CD4-positive, alpha-beta memory T cell (primary cell): ENCODE measurements at regions of chr4 and their contacts with region 1.

Region 1: GRCh38 chr4:152063885-152064240 is 303.1 kb upstream of the GATB start:
- DNase-seq: peak; percentile 61 to 73 (median 70)
- H3K4me3 ChIP-seq: no peak overlapping the region
- H3K4me3 Mint-ChIP-seq: peak overlapping the region in 7 of 8 donors; percentile 23 to 72 (median 51)
- H3K27ac ChIP-seq: no peak overlapping the region
- H3K27ac Mint-ChIP-seq: peak overlapping the region; percentile 32 to 82 (median 63)
- H3K4me1 ChIP-seq: peaks cover 44% of the 10 kb centered on the region
- H3K4me1 Mint-ChIP-seq: peaks cover 32 to 60% (median 40%) of the 10 kb centered on the region in 4 donors
- H3K27me3 ChIP-seq: no peaks in the 10 kb centered on the region
- H3K27me3 Mint-ChIP-seq: no peaks in the 10 kb centered on the region

Region 2: GRCh38 chr4:152112887-152113286 is 49.0 kb after region 1 on chr4:
- CTCF ChIA-PET with region 1: no interaction called
- POLR2A ChIA-PET with region 1: no interaction called
- intact Hi-C with region 1: loop called (anchors 5 kb)
- DNase-seq: no peak
- H3K4me3 ChIP-seq: no peak overlapping the region
- H3K4me3 Mint-ChIP-seq: peak overlapping the region in 2 of 8 donors; percentile 41 to 52
- H3K27ac ChIP-seq: no peak overlapping the region
- H3K27ac Mint-ChIP-seq: peak overlapping the region; percentile 35 to 93 (median 80)
- H3K4me1 ChIP-seq: peaks cover 70% of the 10 kb centered on the region
- H3K4me1 Mint-ChIP-seq: peaks cover 64 to 90% (median 77%) of the 10 kb centered on the region in 4 donors
- H3K27me3 ChIP-seq: no peaks in the 10 kb centered on the region
- H3K27me3 Mint-ChIP-seq: no peaks in the 10 kb centered on the region

Region 3: GRCh38 chr4:152348670-152349069 is 284.8 kb after region 1 on chr4:
- CTCF ChIA-PET with region 1: interaction called, 11 read pairs
- POLR2A ChIA-PET with region 1: no interaction called
- intact Hi-C with region 1: loop called (anchors 1 kb)
- DNase-seq: peak; percentile 17 to 37 (median 19)
- H3K4me3 ChIP-seq: no peak overlapping the region
- H3K4me3 Mint-ChIP-seq: no peak overlapping the region
- H3K27ac ChIP-seq: no peak overlapping the region
- H3K27ac Mint-ChIP-seq: no peak overlapping the region
- H3K4me1 ChIP-seq: no peaks in the 10 kb centered on the region
- H3K4me1 Mint-ChIP-seq: peaks cover 4 to 26% (median 7%) of the 10 kb centered on the region in 4 donors
- H3K27me3 ChIP-seq: no peaks in the 10 kb centered on the region
- H3K27me3 Mint-ChIP-seq: no peaks in the 10 kb centered on the region

Region 4: DNA sequence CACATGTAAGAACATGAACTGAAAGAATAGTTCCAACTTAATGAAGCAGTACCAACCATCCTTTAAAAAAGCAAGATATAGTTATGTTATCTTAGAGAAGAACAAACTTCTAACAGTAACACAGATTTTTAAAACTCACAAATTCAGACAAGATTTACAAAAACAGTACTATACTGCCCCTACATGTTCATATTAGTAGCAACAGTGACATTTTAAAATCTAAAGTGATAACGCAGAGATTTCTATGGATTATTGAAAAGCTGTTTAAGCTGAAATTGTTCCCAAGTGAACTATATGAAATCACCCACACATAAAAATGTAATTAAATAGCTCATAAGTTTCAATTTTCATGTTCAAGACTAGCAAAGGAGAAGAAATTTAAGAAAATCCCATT is 306.0 kb after region 1 on chr4:
- CTCF ChIA-PET with region 1: interaction called, 6 read pairs
- POLR2A ChIA-PET with region 1: no interaction called
- intact Hi-C with region 1: loop called (anchors 5 kb)
- DNase-seq: peak in 2 of 5 donors; percentile 13 to 22
- H3K4me3 ChIP-seq: no peak overlapping the region
- H3K4me3 Mint-ChIP-seq: no peak overlapping the region
- H3K27ac ChIP-seq: no peak overlapping the region
- H3K27ac Mint-ChIP-seq: no peak overlapping the region
- H3K4me1 ChIP-seq: peaks cover 5% of the 10 kb centered on the region
- H3K4me1 Mint-ChIP-seq: peaks cover 11 to 23% (median 14%) of the 10 kb centered on the region in 4 donors
- H3K27me3 ChIP-seq: no peaks in the 10 kb centered on the region
- H3K27me3 Mint-ChIP-seq: no peaks in the 10 kb centered on the region

Region 5: DNA sequence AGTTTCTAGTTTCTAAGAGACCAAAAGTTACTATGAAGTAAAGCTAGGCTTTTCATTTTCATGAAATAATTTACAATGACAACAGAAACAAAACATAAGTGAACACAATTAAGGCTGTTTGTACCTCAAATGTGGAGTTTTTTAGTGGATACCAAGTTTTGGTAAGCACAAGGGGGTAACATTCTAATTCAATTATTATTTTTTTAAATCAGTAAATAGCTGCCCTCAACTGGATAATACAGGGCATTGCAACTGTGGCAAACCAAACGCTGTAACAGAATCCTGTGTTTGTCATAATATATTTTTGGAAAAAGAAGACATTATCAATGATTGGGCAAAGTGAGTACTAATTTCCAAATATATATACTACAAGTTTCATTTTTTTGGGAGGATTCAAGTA is 321.7 kb after region 1 on chr4:
- CTCF ChIA-PET with region 1: interaction called, 6 read pairs
- POLR2A ChIA-PET with region 1: no interaction called
- intact Hi-C with region 1: loop called (anchors 2 kb)
- DNase-seq: peak in 1 of 5 donors; percentile 20
- H3K4me3 ChIP-seq: no peak overlapping the region
- H3K4me3 Mint-ChIP-seq: no peak overlapping the region
- H3K27ac ChIP-seq: no peak overlapping the region
- H3K27ac Mint-ChIP-seq: no peak overlapping the region
- H3K4me1 ChIP-seq: peaks cover 11% of the 10 kb centered on the region
- H3K4me1 Mint-ChIP-seq: peaks cover 22 to 42% (median 27%) of the 10 kb centered on the region in 4 donors
- H3K27me3 ChIP-seq: no peaks in the 10 kb centered on the region
- H3K27me3 Mint-ChIP-seq: no peaks in the 10 kb centered on the region